Mammary epithelial cell (primary cell): ENCODE measurements at regions of chr2 and their contacts with region 1.

Region 1: GRCh38 chr2:166361351-166362153 is 14.2 kb downstream of the SCN9A start:
- DNase-seq: no peak
- H3K4me3 ChIP-seq: no peak overlapping the region
- H3K27ac ChIP-seq: no peak overlapping the region
- H3K4me1 ChIP-seq: no peaks in the 10 kb centered on the region
- H3K27me3 ChIP-seq: no peaks in the 10 kb centered on the region
- CTCF ChIP-seq: peak; percentile 67 to 71

Region 2: DNA sequence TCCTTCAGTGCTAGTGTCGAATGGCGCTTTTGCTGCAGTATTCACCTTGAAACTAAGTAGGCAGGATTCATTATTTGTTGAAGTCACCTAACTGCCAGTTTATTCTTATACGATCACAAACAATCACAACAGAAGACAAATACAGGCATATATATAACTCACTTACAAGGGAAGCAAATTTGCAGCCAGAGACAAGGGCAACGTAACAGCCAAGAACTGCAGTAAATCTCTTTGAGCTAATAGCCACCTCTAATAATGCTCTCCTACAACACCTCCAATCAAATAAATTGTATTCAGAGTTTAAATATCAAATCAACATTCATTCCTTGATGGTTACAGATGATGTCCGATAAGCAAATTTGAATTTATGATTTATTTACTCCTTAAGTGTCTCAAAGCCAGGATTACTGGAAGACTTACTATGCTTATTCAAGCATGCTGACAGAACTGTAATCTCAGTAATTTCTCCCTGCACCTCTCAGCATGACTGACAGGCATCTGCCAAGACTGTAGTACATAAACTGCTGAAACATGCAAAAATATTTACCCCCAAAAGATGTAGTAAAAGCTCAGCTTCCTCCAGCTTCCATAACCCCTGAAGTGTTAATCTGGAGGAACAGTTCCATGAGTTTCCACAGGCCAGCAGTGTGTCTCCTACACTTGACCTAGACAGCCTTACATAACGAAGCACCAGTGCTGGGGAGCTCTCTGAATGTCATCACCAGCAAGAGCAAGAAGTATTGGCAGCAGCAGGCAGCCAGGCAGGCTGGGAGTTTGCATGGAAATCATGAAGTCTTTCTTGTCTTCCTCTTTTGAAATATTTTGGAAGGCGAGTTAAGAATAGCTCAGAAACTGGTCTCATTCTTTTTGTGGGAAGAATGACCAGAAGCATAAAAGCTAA is 212.8 kb before region 1 on chr2:
- CTCF ChIA-PET with region 1: no interaction called
- dilution Hi-C with region 1: no loop called
- in situ Hi-C with region 1: no loop called
- intact Hi-C with region 1: no loop called
- DNase-seq: no peak
- H3K4me3 ChIP-seq: no peak overlapping the region
- H3K27ac ChIP-seq: no peak overlapping the region
- H3K4me1 ChIP-seq: no peaks in the 10 kb centered on the region
- H3K27me3 ChIP-seq: no peaks in the 10 kb centered on the region
- CTCF ChIP-seq: no peak

Region 3: DNA sequence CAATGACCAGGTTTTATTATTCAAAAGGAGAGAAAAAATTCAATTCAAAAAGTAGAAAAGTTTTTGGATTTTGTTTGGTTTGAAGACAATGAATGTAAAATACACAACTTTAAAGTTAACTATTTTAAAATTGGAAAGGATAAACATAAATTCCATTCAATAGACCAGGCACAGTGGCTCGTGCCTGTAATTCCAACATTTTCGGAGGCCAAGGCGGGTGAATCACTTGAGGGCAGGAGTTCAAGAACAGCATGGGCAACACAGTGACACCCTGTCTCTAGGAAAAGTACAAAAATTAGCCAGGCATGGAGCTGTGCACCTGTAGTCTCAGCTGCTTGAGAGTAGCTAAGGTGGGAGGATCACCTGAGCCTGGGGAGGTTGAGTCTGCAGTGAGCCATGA is 40.5 kb before region 1 on chr2:
- CTCF ChIA-PET with region 1: no interaction called
- dilution Hi-C with region 1: no loop called
- in situ Hi-C with region 1: no loop called
- intact Hi-C with region 1: no loop called
- DNase-seq: no peak
- H3K4me3 ChIP-seq: no peak overlapping the region
- H3K27ac ChIP-seq: no peak overlapping the region
- H3K4me1 ChIP-seq: no peaks in the 10 kb centered on the region
- H3K27me3 ChIP-seq: no peaks in the 10 kb centered on the region
- CTCF ChIP-seq: no peak

Region 4: GRCh38 chr2:166384774-166385173 is 23.2 kb after region 1 on chr2:
- CTCF ChIA-PET with region 1: no interaction called
- dilution Hi-C with region 1: no loop called
- in situ Hi-C with region 1: no loop called
- intact Hi-C with region 1: loop called (anchors 1 kb)
- DNase-seq: peak; percentile 11
- H3K4me3 ChIP-seq: no peak overlapping the region
- H3K27ac ChIP-seq: no peak overlapping the region
- H3K4me1 ChIP-seq: no peaks in the 10 kb centered on the region
- H3K27me3 ChIP-seq: no peaks in the 10 kb centered on the region
- CTCF ChIP-seq: peak; percentile 36 to 48

Region 5: DNA sequence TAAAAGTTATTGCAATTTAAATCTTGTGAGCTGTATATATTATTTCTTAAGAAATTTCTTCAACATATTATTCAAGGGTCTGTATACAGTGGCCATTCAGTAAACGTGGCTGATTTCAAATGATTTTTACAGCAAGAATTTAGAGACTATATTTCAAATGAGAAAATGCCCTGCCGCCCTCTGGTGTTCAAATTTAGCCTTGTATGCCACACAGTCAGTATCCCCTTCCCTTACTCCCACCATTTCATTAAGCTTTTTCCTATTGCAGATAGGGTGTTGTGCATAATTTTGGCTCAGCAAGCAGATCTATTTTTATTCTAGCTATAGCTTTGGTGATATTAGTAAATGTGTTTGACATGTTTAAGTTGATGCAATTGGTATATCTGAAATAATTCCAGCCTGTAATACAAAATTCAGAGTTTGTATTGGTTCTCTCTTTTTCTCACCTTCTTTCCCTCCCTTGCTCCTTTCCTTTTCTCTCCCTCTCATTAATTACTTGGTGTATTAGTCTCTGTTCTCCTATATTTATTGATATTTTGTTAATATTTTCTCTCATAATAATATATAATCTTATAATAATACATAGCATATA is 155.3 kb after region 1 on chr2:
- CTCF ChIA-PET with region 1: no interaction called
- dilution Hi-C with region 1: no loop called
- in situ Hi-C with region 1: no loop called
- intact Hi-C with region 1: loop called (anchors 5 kb)
- DNase-seq: peak; percentile 11
- H3K4me3 ChIP-seq: no peak overlapping the region
- H3K27ac ChIP-seq: no peak overlapping the region
- H3K4me1 ChIP-seq: peaks cover 13% of the 10 kb centered on the region
- H3K27me3 ChIP-seq: no peaks in the 10 kb centered on the region
- CTCF ChIP-seq: peak; percentile 51 to 67